Dorsolateral prefrontal cortex (tissue), 120 donors: ENCODE measurements at regions of chr6 and their contacts with region 1.

Region 1: GRCh38 chr6:79246891-79247290 is 12.4 kb upstream of the HMGN3 start:
- DNase-seq: no peak
- H3K4me3 ChIP-seq: no peak overlapping the region
- H3K27ac ChIP-seq: no peak overlapping the region
- H3K27me3 ChIP-seq: no peaks in the 10 kb centered on the region
- CTCF ChIP-seq: no peak

Region 2: GRCh38 chr6:79196912-79197311 is 50.0 kb before region 1 on chr6:
- intact Hi-C with region 1: loop called in 1 of 2 experiments (anchors 1 kb)
- DNase-seq: no peak
- H3K4me3 ChIP-seq: no peak overlapping the region
- H3K27ac ChIP-seq: no peak overlapping the region
- H3K27me3 ChIP-seq: no peaks in the 10 kb centered on the region
- CTCF ChIP-seq: no peak

Region 3: DNA sequence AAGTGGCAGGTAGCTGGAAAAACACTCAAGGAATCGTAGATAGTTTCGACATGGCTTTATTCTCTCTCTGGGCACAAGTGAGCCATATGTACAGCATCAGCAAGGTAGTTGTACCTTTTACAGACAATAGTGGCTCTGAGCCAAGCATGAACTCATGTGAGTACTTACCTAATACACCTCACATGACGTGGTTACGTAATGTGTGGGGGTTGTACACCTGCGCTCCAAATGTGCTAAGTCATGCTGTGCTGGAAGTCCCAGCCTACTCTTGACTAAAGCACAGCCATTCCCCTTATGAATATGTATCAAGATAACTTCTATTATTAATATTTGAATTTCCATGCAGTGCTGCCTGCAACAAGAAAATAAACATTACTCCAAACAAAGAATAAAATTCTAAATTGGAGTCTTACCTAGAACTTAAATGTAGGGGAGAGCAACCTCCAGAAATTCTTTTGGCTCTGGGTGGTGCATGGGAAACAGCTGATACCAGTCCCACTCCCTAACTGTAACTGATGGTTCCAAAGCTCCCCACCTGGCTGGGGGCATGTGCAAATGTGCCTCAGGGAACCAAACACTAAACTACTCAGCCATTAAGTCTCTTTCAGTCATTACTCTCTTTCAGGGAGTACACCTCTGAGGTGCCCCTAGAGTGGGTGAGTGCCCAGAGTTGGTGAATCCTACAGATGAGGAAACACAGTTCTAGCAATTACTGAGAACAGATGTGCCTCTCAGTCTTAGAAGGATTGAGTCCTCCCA is 66.5 kb after region 1 on chr6:
- intact Hi-C with region 1: no loop called
- DNase-seq: no peak
- H3K4me3 ChIP-seq: no peak overlapping the region
- H3K27ac ChIP-seq: no peak overlapping the region
- H3K27me3 ChIP-seq: no peaks in the 10 kb centered on the region
- CTCF ChIP-seq: no peak